GM12878 (cell line): ENCODE measurements at regions of chr4 and their contacts with region 1.

Region 1: GRCh38 chr4:143489106-143489505 is 24.4 kb upstream of the SMARCA5 start:
- DNase-seq: no peak
- ATAC-seq: no peak
- H3K4me3 ChIP-seq: no peak overlapping the region
- H3K27ac ChIP-seq: no peak overlapping the region
- H3K4me1 ChIP-seq: no peaks in the 10 kb centered on the region
- H3K27me3 ChIP-seq: no peaks in the 10 kb centered on the region; a peak in 1 of 4 replicates
- CTCF ChIP-seq: no peak
- EP300 ChIP-seq: no peak
- POLR2A ChIP-seq: no peak
- RAD21 ChIP-seq: no peak

Region 2: DNA sequence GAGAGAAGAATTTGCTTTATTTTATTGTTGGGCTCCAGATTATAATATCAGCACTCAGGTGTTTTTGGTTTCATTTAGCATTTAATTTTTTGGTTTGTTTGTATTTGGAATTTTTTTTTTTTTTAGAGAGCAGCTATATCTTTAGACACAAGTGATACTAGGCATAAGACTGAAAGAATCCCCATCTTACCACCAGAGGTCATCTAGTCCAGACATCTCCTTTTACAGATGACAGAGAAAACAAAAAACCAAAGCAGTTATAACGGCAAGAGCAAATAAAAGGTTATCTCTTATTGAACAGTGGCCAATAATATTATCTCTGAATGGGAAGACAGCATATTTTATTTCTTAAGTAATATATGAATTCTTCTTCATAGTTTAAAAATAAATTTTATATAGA is 281.5 kb before region 1 on chr4:
- CTCF ChIA-PET with region 1: interaction called, 6 read pairs
- POLR2A ChIA-PET with region 1: no interaction called
- RAD21 ChIA-PET with region 1: no interaction called
- SMC1A ChIA-PET with region 1: interaction called, 4 read pairs
- in situ Hi-C with region 1: loop called (anchors 5 kb)
- intact Hi-C with region 1: no loop called
- DNase-seq: no peak
- ATAC-seq: peak; percentile 48; the same call in 2 of the 3 replicates
- H3K4me3 ChIP-seq: no peak overlapping the region
- H3K27ac ChIP-seq: no peak overlapping the region
- H3K4me1 ChIP-seq: no peaks in the 10 kb centered on the region
- H3K27me3 ChIP-seq: no peaks in the 10 kb centered on the region
- CTCF ChIP-seq: peak in 2 of 3 experiments; percentile 7 to 14; a peak in 1 of 6 replicates
- EP300 ChIP-seq: no peak
- POLR2A ChIP-seq: no peak
- RAD21 ChIP-seq: peak; percentile 28; the same call in 1 of the 2 replicates